Activated CD4-positive, alpha-beta T cell treated with anti-CD3 and anti-CD28 coated beads for 36 hours (primary cell): ENCODE measurements at regions of chr14 and their contacts with region 1.

Region 1: DNA sequence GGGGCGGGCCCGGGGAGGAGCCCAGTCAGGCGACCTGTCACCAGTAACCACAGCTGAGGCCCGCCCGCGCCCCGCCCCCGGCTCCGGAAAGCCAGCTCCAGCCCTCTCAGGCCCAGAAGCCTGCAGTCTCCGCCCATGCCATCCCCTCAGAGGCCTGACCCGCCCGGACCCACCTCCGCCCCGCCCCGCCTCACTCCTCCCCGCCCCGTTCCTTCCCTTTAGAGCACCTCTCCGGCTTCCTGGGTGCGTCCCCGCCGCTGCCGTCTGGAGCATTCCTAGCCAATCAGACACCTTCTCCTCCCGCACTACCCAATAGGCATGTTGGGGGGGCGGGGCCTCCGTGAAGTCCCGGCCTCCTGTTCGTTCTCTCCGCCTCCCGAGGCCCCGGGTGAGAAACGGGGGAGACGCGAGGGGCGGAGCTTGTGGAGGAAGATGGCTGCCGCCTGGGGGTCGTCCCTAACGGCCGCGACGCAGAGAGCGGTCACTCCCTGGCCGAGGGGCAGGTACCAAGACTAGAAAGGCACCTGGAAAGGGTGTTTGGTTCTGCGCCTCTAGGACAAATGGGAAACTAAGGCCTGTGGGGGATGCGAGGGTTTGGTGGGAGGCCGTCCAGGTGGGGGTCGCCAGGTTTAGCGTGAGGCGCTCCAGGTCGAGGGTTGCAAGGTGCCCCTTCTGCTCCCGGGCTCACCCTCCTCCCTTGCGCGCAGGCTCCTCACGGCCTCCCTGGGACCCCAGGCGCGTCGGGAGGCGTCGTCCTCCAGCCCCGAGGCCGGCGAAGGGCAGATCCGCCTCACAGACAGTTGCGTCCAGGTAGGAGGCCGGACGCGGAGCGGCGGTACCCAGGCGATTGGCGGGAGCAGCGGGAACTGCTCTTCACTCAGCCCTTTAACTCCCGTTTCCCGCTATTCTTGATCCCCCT is at the start of gene ISCA2:
- DNase-seq: peak; percentile 100
- ATAC-seq: peak; percentile 96
- H3K4me3 Mint-ChIP-seq: no peak within 1 kb of the TSS
- H3K27ac Mint-ChIP-seq: peak within 1 kb of the TSS; percentile 89
- H3K4me1 Mint-ChIP-seq: peaks cover 23% of the 10 kb centered on the region
- H3K27me3 Mint-ChIP-seq: no peaks in the 10 kb centered on the region
- total RNA-seq, gene ISCA2: 29.5 to 35.9 TPM

Region 2: GRCh38 chr14:73851644-73852382 is 641.8 kb before region 1 on chr14 and contains the start of gene PTGR2:
- CTCF ChIA-PET with region 1: no interaction called
- POLR2A ChIA-PET with region 1: no interaction called
- intact Hi-C with region 1: loop called in 1 of 2 experiments (anchors 2 kb)
- DNase-seq: peak; percentile 94
- ATAC-seq: peak; percentile 94
- H3K4me3 Mint-ChIP-seq: peak within 1 kb of the TSS; percentile 98
- H3K27ac Mint-ChIP-seq: peak within 1 kb of the TSS; percentile 100
- H3K4me1 Mint-ChIP-seq: peaks cover 24% of the 10 kb centered on the region
- H3K27me3 Mint-ChIP-seq: no peaks in the 10 kb centered on the region
- total RNA-seq, gene PTGR2: 12.6 to 14.3 TPM

Region 3: DNA sequence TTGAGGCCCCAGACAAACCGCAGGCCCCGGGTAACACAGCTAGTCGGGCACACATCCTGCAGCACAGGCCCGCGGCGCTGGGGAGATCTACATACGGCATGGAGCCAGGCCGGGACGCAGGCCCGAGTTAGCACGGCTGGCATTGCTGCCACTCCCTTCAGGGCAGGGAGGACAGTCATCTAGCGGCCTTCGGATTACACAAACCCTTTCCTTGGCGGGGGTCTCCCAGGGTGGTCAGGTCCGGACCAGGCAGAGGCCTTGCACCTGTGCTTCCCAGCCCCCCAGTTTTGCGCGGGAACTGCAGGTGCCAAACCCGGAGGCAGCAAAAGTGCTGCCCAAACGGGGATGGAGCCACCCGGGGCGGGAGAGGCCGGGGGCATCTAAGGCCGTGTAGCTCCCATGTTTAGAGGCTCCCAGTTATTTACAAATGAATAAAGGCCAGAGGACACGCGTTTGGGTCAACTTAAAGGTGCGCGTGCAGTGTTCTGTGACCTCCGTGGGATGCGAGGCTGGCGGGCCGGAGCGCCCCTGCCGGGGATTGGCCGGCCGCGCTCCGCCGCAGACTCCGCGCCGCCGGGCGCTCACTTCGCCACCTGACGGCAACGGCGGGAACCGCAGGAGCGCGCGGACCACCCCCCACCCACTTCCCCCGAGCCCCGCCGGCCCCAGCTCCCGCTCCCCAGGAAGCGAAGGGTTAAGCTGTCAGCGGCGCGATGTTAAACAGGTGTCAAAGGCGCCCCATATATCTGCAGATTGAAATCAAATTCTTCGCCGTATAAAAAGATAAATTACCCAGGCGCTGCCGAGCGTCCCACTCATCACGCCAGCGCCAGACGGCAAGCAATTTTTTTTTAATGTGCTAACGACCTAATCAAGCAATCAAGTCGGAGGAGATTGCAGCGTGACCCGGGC is 236.3 kb before region 1 on chr14:
- CTCF ChIA-PET with region 1: no interaction called
- POLR2A ChIA-PET with region 1: no interaction called
- intact Hi-C with region 1: loop called in 1 of 2 experiments (anchors 1 kb)
- DNase-seq: peak; percentile 77
- ATAC-seq: peak; percentile 89
- H3K4me3 Mint-ChIP-seq: peak overlapping the region; percentile 69
- H3K27ac Mint-ChIP-seq: peak overlapping the region; percentile 42
- H3K4me1 Mint-ChIP-seq: peaks cover 7% of the 10 kb centered on the region
- H3K27me3 Mint-ChIP-seq: peaks cover 3% of the 10 kb centered on the region

Region 4: GRCh38 chr14:74425525-74426201 is 67.9 kb before region 1 on chr14:
- CTCF ChIA-PET with region 1: interaction called, 3 read pairs
- POLR2A ChIA-PET with region 1: no interaction called
- intact Hi-C with region 1: loop called in 1 of 2 experiments (anchors 2 kb)
- DNase-seq: peak; percentile 72
- ATAC-seq: peak; percentile 83
- H3K4me3 Mint-ChIP-seq: no peak overlapping the region
- H3K27ac Mint-ChIP-seq: no peak overlapping the region
- H3K4me1 Mint-ChIP-seq: peaks cover 2% of the 10 kb centered on the region
- H3K27me3 Mint-ChIP-seq: peaks cover 38% of the 10 kb centered on the region

Region 5: DNA sequence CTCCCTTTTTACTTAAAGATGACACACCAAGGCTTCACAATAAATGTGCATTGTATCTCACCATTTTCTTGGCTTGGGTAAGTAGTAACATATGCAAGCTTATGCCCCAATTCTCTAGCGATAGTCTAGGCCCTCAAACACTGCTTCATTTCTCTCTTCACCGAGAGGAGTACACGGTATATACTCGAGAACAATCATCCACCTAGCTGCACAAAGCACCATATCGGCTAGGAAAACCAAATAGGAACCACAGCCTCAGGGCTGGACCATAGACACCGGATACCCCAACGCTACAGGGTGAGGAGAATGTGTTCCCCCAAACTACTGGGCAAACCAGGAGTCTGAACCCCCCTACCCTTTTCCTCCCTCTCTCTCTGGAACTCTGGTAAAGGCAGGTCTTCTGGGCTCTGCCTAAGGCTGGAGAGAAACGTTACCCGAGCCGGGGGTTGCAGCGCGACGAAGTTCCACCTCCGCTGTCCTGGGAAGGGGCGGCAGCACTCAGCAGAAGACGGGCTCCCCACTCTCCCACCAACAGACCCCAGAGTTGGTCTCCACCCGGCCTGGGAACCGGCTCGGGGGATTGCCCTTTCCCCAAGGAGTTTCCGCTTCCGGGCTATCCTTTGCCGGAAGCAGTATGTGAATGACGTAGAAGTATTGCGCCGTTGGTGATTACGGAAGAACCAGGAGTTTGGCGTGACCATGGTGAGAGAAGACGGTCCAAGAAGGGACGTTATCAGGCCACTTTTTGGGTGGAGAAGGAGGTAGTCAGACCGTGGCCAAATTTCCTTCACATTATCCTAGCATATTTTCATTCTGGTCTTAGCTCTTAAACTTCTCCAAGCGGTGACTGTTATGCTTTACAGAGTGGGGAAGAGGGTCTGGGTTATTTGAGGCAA is 219.1 kb after region 1 on chr14 and contains the starts of genes AREL1 and FCF1:
- CTCF ChIA-PET with region 1: no interaction called
- POLR2A ChIA-PET with region 1: no interaction called
- intact Hi-C with region 1: loop called in 1 of 2 experiments (anchors 2 kb)
- DNase-seq: peak; percentile 88
- ATAC-seq: peak; percentile 98
- H3K4me3 Mint-ChIP-seq: peak within 1 kb of the TSS; percentile 98
- H3K27ac Mint-ChIP-seq: peak within 1 kb of the TSS; percentile 98
- H3K4me1 Mint-ChIP-seq: peaks cover 50% of the 10 kb centered on the region
- H3K27me3 Mint-ChIP-seq: no peaks in the 10 kb centered on the region
- total RNA-seq, gene AREL1: 31.3 to 35.6 TPM
- total RNA-seq, gene FCF1: 87.7 to 112 TPM

Region 6: DNA sequence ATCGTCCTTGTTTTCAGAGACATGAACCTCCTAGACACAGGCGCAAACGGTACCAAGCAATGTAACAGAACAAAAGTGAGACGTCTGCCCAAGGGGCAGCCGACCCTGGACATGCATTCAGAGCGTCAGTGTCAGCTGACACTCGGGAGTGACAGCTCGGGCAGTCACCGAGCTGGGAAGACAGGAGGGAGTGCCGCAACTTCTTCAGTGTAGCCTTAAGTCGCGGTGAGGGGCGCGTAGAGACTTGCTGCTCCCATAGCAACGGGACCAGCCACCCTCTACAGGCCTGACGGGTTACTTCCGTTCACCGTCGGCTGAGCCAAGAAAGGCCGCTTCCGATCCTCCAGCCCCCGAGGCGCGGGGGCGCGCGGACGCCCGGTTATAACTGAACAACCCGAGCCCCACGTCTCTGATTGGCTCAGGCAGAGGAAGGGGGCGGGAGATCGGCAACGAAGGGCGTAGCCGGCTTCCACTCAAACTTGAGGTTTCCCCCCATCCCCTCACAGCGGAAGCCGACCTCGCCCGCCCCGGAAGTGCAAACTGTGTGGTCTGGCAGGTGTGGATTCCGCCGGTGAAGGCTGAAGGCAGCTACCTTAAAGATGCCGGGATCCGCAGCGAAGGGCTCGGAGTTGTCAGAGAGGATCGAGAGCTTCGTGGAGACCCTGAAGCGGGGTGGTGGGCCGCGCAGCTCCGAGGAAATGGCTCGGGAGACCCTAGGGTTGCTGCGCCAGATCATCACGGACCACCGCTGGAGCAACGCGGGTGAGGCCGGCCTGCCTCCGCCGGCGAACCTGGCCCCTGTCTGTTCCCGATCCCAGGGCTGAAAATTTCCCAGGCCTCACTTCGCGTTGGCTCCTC is 509.0 kb after region 1 on chr14 and contains the start of gene EIF2B2:
- CTCF ChIA-PET with region 1: no interaction called
- POLR2A ChIA-PET with region 1: no interaction called
- intact Hi-C with region 1: loop called in 1 of 2 experiments (anchors 1 kb)
- DNase-seq: peak; percentile 99
- ATAC-seq: peak; percentile 97
- H3K4me3 Mint-ChIP-seq: peak within 1 kb of the TSS; percentile 87
- H3K27ac Mint-ChIP-seq: peak within 1 kb of the TSS; percentile 88
- H3K4me1 Mint-ChIP-seq: peaks cover 34% of the 10 kb centered on the region
- H3K27me3 Mint-ChIP-seq: no peaks in the 10 kb centered on the region
- total RNA-seq, gene EIF2B2: 55.6 to 69.8 TPM